SK-N-SH (cell line): ENCODE measurements at regions of chr5 and their contacts with region 1.

Region 1: GRCh38 chr5:112492291-112492690 is 73.2 kb upstream of the EPB41L4A start:
- DNase-seq: peak; percentile 52
- H3K4me3 ChIP-seq: no peak overlapping the region; a peak in 1 of 4 replicates
- H3K27ac ChIP-seq: no peak overlapping the region
- H3K4me1 ChIP-seq: no peaks in the 10 kb centered on the region
- H3K27me3 ChIP-seq: no peaks in the 10 kb centered on the region; the same call in 1 of the 2 replicates
- CTCF ChIP-seq: peak; percentile 56
- EP300 ChIP-seq: no peak
- RAD21 ChIP-seq: peak; percentile 51

Region 2: GRCh38 chr5:112479407-112479806 is 12.9 kb before region 1 on chr5:
- CTCF ChIA-PET with region 1: interaction called, 12 read pairs
- POLR2A ChIA-PET with region 1: no interaction called
- DNase-seq: no peak
- H3K4me3 ChIP-seq: no peak overlapping the region
- H3K27ac ChIP-seq: no peak overlapping the region
- H3K4me1 ChIP-seq: no peaks in the 10 kb centered on the region
- H3K27me3 ChIP-seq: no peaks in the 10 kb centered on the region; the same call in 1 of the 2 replicates
- CTCF ChIP-seq: no peak
- EP300 ChIP-seq: no peak
- RAD21 ChIP-seq: no peak

Region 3: DNA sequence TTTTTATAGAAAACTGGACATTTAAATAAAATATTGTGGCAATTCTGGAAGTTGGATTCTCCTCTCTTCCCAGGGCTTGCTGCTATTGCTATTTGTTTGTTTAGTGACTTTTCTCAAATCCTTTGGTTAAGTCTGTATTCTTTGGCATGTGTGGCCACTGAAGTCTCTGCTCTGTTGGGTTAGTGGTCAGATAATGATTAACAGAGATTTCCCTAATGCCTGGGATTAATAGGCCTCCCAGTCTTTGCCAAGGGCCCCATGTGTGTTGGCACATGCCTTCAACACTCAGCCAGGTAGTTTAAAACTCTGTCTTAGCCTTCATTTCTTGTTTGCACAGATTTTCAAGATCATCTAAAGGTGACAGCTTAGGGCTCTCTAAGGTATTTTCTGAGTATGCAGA is 19.6 kb after region 1 on chr5:
- CTCF ChIA-PET with region 1: interaction called, 11 read pairs
- POLR2A ChIA-PET with region 1: no interaction called
- DNase-seq: no peak
- H3K4me3 ChIP-seq: no peak overlapping the region
- H3K27ac ChIP-seq: no peak overlapping the region
- H3K4me1 ChIP-seq: no peaks in the 10 kb centered on the region
- H3K27me3 ChIP-seq: no peaks in the 10 kb centered on the region
- CTCF ChIP-seq: no peak
- EP300 ChIP-seq: no peak
- RAD21 ChIP-seq: no peak

Region 4: GRCh38 chr5:113090336-113091106 is 598.2 kb after region 1 on chr5:
- CTCF ChIA-PET with region 1: no interaction called
- POLR2A ChIA-PET with region 1: no interaction called
- DNase-seq: peak; percentile 33
- H3K4me3 ChIP-seq: no peak overlapping the region
- H3K27ac ChIP-seq: no peak overlapping the region; a peak in 1 of 4 replicates
- H3K4me1 ChIP-seq: peaks cover 0 to 19% of the 10 kb centered on the region in 2 experiments; a peak in 1 of 4 replicates
- H3K27me3 ChIP-seq: no peaks in the 10 kb centered on the region
- CTCF ChIP-seq: no peak
- EP300 ChIP-seq: no peak
- RAD21 ChIP-seq: no peak